ENCODE measurements at regions of chr20 and their contacts with region 1.

Region 1: DNA sequence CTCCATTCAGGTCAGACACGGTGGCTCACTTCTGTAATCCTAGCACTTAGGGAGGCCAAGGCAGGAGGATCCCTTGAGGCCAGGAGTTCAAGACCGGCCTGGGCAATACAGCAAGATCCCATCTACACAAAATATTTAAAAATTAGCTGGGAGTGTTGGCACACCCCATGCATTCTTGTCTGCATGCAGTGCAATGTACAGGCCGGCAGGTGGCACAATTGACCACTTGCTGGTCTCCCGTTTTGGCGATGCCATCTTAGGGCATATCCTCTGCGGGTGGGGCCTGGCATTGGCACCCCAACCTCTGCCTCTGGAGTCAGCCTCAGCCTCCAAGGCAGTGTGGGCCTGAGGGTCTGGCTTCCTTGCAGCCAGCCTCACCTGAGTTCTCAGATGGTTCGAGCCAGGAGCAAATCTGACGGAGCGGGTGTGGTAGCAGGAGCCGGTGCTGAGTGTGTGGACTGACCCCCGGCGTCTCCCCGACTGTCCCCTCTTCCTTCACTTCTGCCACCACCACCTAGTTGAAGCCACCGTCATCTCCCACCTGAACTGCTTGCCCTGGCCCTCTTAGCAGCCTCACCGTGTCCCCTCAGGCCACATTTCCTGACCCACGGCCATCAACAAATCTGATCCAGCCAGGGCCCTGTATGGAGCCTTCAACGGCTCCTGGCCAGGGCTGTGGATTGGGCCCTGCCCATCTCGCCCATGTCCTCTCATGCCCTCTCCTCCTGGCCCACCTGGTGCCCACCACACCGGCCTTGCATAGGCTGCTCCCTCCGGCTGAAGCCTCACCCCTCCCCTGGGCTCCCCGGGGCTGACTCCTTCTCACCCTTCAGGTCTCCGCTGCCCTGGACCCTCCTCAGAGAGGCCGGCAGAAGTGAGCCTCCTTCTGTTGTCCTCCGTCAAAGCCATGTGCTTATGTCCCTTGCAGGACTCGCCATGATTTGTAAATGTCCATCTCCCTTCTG is 44.0 kb downstream of the EFCAB8 start:
- DNase-seq: peak; percentile 75
- H3K4me3 Mint-ChIP-seq: no peak overlapping the region
- H3K27ac Mint-ChIP-seq: no peak overlapping the region
- H3K4me1 Mint-ChIP-seq: no peaks in the 10 kb centered on the region
- H3K27me3 Mint-ChIP-seq: peaks cover 28% of the 10 kb centered on the region
- CTCF ChIP-seq: peak; percentile 97

Region 2: DNA sequence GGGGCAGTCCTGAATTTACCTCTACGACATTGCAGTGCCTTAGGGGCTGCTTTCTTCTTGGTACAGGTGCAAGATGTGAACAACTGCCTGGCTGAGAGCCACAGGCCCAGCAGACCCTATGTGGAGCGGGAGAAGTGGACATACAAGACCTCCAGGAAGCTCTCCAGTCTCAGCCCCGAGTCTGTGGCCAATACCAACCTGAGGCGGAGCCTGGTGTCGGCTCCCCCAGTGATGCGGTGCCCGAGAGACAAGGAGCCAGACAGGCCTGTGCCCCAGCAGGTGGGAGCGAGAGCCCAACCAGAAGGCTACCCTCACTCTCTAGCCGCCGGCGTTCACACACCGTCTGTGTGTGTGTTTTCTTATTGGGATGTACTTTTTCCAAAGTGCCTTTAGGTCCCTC is 15.6 kb after region 1 on chr20:
- CTCF ChIA-PET with region 1: no interaction called
- intact Hi-C with region 1: no loop called
- DNase-seq: no peak
- H3K4me3 Mint-ChIP-seq: no peak overlapping the region
- H3K27ac Mint-ChIP-seq: no peak overlapping the region
- H3K4me1 Mint-ChIP-seq: no peaks in the 10 kb centered on the region
- H3K27me3 Mint-ChIP-seq: peaks cover 34% of the 10 kb centered on the region
- CTCF ChIP-seq: no peak

Region 3: GRCh38 chr20:33299111-33299603 is 396.4 kb after region 1 on chr20:
- CTCF ChIA-PET with region 1: no interaction called
- intact Hi-C with region 1: loop called (anchors 10 kb)
- DNase-seq: peak; percentile 93
- H3K4me3 Mint-ChIP-seq: peak overlapping the region; percentile 10
- H3K27ac Mint-ChIP-seq: no peak overlapping the region
- H3K4me1 Mint-ChIP-seq: peaks cover 5% of the 10 kb centered on the region
- H3K27me3 Mint-ChIP-seq: peaks cover 63% of the 10 kb centered on the region
- CTCF ChIP-seq: peak; percentile 99